ENCODE measurements at regions of chr12 and their contacts with region 1.

Region 1: GRCh38 chr12:7933255-7933729 is 2.7 kb downstream of the SLC2A3 start:
- DNase-seq: peak; percentile 48 to 95
- ATAC-seq: peak; percentile 71 to 92 (median 81)
- H3K4me3 ChIP-seq: peak overlapping the region; percentile 94
- H3K4me3 Mint-ChIP-seq: no peak overlapping the region
- H3K27ac ChIP-seq: peak overlapping the region; percentile 89
- H3K27ac Mint-ChIP-seq: no peak overlapping the region
- H3K4me1 ChIP-seq: peaks cover 54% of the 10 kb centered on the region
- H3K4me1 Mint-ChIP-seq: peaks cover 30 to 36% of the 10 kb centered on the region in 2 donors
- H3K27me3 ChIP-seq: no peaks in the 10 kb centered on the region
- H3K27me3 Mint-ChIP-seq: no peaks in the 10 kb centered on the region
- CTCF ChIP-seq: peak; percentile 69

Region 2: GRCh38 chr12:7859552-7859951 is 73.7 kb before region 1 on chr12:
- intact Hi-C with region 1: loop called (anchors 1 kb)
- DNase-seq: no peak
- ATAC-seq: no peak
- H3K4me3 ChIP-seq: no peak overlapping the region
- H3K4me3 Mint-ChIP-seq: no peak overlapping the region
- H3K27ac ChIP-seq: no peak overlapping the region
- H3K27ac Mint-ChIP-seq: peak overlapping the region in 1 of 2 donors; percentile 69
- H3K4me1 ChIP-seq: peaks cover 13% of the 10 kb centered on the region
- H3K4me1 Mint-ChIP-seq: peaks cover 15 to 21% of the 10 kb centered on the region in 2 donors
- H3K27me3 ChIP-seq: peaks cover 2% of the 10 kb centered on the region
- H3K27me3 Mint-ChIP-seq: peaks cover 9 to 10% of the 10 kb centered on the region in 2 donors
- CTCF ChIP-seq: no peak

Region 3: GRCh38 chr12:7899755-7900154 is 33.5 kb before region 1 on chr12:
- intact Hi-C with region 1: no loop called
- DNase-seq: no peak
- ATAC-seq: no peak
- H3K4me3 ChIP-seq: no peak overlapping the region
- H3K4me3 Mint-ChIP-seq: no peak overlapping the region
- H3K27ac ChIP-seq: no peak overlapping the region
- H3K27ac Mint-ChIP-seq: no peak overlapping the region
- H3K4me1 ChIP-seq: no peaks in the 10 kb centered on the region
- H3K4me1 Mint-ChIP-seq: no peaks in the 10 kb centered on the region
- H3K27me3 ChIP-seq: no peaks in the 10 kb centered on the region
- H3K27me3 Mint-ChIP-seq: no peaks in the 10 kb centered on the region
- CTCF ChIP-seq: no peak

Region 4: GRCh38 chr12:7915559-7916403 is 17.5 kb before region 1 on chr12:
- intact Hi-C with region 1: no loop called
- DNase-seq: peak in 1 of 2 donors; percentile 50
- ATAC-seq: peak; percentile 59 to 83 (median 66)
- H3K4me3 ChIP-seq: no peak overlapping the region
- H3K4me3 Mint-ChIP-seq: peak overlapping the region; percentile 76
- H3K27ac ChIP-seq: peak overlapping the region; percentile 35
- H3K27ac Mint-ChIP-seq: peak overlapping the region; percentile 54 to 77
- H3K4me1 ChIP-seq: peaks cover 32% of the 10 kb centered on the region
- H3K4me1 Mint-ChIP-seq: peaks cover 32 to 50% of the 10 kb centered on the region in 2 donors
- H3K27me3 ChIP-seq: no peaks in the 10 kb centered on the region
- H3K27me3 Mint-ChIP-seq: no peaks in the 10 kb centered on the region
- CTCF ChIP-seq: no peak

Region 5: DNA sequence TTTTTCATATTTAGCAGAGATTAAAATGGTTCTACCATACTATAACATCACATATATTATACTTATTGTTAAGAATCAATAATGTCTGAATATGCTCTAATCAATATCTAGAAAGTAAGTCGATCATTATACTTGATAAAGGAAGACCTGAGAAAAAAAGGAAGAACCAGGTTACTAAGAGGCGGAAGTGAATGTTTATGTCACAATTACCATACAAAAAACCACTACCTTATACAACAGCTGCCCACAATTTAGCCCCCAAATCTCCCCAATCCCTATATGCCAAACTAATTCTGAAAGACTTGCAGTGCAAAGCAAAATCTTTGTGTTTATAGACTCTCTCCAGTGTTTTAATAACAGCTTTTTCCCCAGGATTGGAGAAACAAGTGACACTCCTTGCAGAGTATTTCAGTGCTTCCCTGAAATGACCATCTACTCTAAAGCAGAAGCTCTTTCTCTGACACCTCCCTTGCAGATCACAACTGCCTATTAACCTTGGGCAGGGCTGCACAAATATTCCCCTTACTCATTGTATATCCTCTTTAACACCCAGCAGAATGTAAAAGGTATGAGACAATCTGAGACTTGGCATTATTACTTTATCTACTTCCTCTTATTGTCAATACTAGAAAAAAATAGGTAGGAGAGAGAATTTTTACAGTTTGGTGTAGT is 15.4 kb after region 1 on chr12:
- intact Hi-C with region 1: no loop called
- DNase-seq: no peak
- ATAC-seq: peak in 2 of 3 donors; percentile 57 to 60
- H3K4me3 ChIP-seq: no peak overlapping the region
- H3K4me3 Mint-ChIP-seq: no peak overlapping the region
- H3K27ac ChIP-seq: no peak overlapping the region
- H3K27ac Mint-ChIP-seq: peak overlapping the region in 1 of 2 donors; percentile 56
- H3K4me1 ChIP-seq: peaks cover 18% of the 10 kb centered on the region
- H3K4me1 Mint-ChIP-seq: peaks cover 0 to 9% of the 10 kb centered on the region in 2 donors
- H3K27me3 ChIP-seq: no peaks in the 10 kb centered on the region
- H3K27me3 Mint-ChIP-seq: no peaks in the 10 kb centered on the region
- CTCF ChIP-seq: no peak

Region 6: DNA sequence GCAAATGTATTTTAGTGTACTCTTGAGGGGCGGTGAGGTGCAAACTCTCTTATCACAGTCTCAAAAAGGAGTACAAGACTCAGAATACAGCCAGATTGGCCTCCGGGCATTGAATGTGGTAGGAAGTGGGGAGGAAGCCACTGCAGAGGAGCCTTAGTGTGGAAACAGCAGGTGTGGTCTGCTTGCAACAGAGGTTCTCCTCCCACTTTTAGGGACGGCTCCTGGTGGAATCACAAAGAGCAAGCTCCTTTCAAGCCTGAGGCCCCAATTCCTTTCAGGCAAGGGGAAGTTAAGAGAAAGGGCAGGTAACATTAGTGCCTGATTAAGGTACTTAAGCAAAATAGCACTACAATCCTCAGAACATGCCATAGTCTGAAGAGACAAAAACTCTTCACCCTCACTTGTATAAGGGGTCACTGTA is 26.4 kb after region 1 on chr12:
- intact Hi-C with region 1: loop called (anchors 1 kb)
- DNase-seq: peak; percentile 42 to 77
- ATAC-seq: peak; percentile 33 to 63 (median 45)
- H3K4me3 ChIP-seq: peak overlapping the region; percentile 46
- H3K4me3 Mint-ChIP-seq: peak overlapping the region; percentile 85
- H3K27ac ChIP-seq: peak overlapping the region; percentile 83
- H3K27ac Mint-ChIP-seq: peak overlapping the region; percentile 88 to 96
- H3K4me1 ChIP-seq: peaks cover 27% of the 10 kb centered on the region
- H3K4me1 Mint-ChIP-seq: peaks cover 32 to 38% of the 10 kb centered on the region in 2 donors
- H3K27me3 ChIP-seq: no peaks in the 10 kb centered on the region
- H3K27me3 Mint-ChIP-seq: no peaks in the 10 kb centered on the region
- CTCF ChIP-seq: no peak

Region 7: DNA sequence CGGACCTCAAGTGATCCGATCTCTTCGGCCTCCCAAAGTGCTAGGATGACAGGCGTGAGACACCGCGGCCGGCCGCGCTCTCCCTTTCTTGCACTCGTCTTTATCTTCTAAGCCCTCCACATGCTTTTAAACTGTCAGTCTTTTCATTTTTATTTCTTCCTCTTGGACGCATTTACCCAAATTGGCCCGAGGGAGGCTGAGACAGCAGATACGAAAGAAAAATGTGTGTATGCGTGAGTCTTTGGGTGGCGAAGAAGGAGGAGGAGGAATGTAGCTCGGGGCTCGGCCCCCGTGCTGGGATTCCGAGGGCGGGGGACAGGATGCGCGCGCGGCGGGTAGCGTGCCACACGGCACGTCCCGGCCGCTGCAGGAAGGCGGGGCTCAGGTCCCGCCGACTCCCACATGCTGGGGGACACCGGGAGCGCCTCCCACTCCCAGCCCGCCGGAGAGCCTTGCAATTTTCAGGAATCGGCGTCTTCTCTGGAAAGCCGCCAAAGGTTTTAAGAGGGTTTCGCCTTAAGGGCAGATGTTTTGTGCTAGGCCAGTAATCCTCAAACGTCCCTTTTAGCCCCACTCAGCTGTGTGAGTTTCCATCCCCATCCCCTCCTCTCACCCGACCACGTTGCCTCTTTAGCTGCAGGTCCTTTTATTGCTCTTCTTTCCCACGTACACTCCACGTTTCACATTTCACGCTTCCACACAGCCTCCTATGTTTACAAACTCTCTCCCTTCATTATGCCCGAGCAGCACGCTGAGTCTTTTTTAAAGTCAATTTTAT is 37.4 kb after region 1 on chr12:
- intact Hi-C with region 1: loop called (anchors 5 kb)
- DNase-seq: peak; percentile 69 to 95
- ATAC-seq: peak; percentile 91 to 96 (median 92)
- H3K4me3 ChIP-seq: peak overlapping the region; percentile 79
- H3K4me3 Mint-ChIP-seq: peak overlapping the region; percentile 82
- H3K27ac ChIP-seq: peak overlapping the region; percentile 98
- H3K27ac Mint-ChIP-seq: peak overlapping the region; percentile 86 to 90
- H3K4me1 ChIP-seq: peaks cover 24% of the 10 kb centered on the region
- H3K4me1 Mint-ChIP-seq: peaks cover 14 to 17% of the 10 kb centered on the region in 2 donors
- H3K27me3 ChIP-seq: no peaks in the 10 kb centered on the region
- H3K27me3 Mint-ChIP-seq: no peaks in the 10 kb centered on the region
- CTCF ChIP-seq: no peak

Region 8: DNA sequence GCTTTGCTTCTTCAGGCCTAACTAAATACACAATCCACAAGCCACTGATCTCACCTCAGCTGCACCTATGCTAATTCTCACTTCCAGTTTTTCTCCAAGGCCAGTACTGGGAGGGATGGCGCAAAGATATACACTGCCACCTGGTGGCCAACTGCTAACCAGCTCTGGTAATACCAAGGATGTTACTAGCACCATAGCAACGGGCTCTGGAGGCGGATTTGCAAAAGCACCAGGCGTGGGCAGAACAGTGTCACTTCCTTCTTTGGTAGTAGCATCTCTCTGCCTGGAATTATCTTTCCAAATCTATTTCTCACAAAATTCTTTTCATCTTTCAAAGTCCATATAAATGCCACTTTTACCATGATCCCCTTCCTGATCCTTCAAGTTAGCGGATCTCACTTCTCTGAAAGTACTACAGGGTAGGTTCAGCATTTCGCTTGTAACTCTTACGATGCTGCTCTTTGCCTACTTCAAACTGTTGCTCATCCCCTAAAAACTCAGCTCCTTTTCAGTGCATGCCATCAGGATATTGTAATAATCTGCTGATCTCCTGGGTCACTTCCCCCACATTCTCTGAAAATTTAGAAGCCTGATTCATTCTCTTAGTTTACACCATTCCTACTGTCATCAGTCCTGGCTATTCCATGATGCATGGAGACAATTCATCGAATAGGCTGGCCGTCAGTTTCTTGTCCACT is 62.1 kb after region 1 on chr12:
- intact Hi-C with region 1: loop called (anchors 1 kb)
- DNase-seq: peak; percentile 62 to 90
- ATAC-seq: peak; percentile 98 to 100 (median 99)
- H3K4me3 ChIP-seq: no peak overlapping the region
- H3K4me3 Mint-ChIP-seq: no peak overlapping the region
- H3K27ac ChIP-seq: peak overlapping the region; percentile 22
- H3K27ac Mint-ChIP-seq: no peak overlapping the region
- H3K4me1 ChIP-seq: peaks cover 7% of the 10 kb centered on the region
- H3K4me1 Mint-ChIP-seq: peaks cover 11 to 12% of the 10 kb centered on the region in 2 donors
- H3K27me3 ChIP-seq: no peaks in the 10 kb centered on the region
- H3K27me3 Mint-ChIP-seq: no peaks in the 10 kb centered on the region
- CTCF ChIP-seq: peak; percentile 78

Region 9: GRCh38 chr12:8026291-8026900 is 93.1 kb after region 1 on chr12:
- intact Hi-C with region 1: loop called (anchors 1 kb)
- DNase-seq: peak; percentile 94 to 98
- ATAC-seq: peak; percentile 93 to 99 (median 93)
- H3K4me3 ChIP-seq: peak overlapping the region; percentile 88
- H3K4me3 Mint-ChIP-seq: peak overlapping the region; percentile 99
- H3K27ac ChIP-seq: peak overlapping the region; percentile 99
- H3K27ac Mint-ChIP-seq: peak overlapping the region; percentile 100
- H3K4me1 ChIP-seq: peaks cover 13% of the 10 kb centered on the region
- H3K4me1 Mint-ChIP-seq: peaks cover 17 to 18% of the 10 kb centered on the region in 2 donors
- H3K27me3 ChIP-seq: no peaks in the 10 kb centered on the region
- H3K27me3 Mint-ChIP-seq: no peaks in the 10 kb centered on the region
- CTCF ChIP-seq: no peak

Region 10: DNA sequence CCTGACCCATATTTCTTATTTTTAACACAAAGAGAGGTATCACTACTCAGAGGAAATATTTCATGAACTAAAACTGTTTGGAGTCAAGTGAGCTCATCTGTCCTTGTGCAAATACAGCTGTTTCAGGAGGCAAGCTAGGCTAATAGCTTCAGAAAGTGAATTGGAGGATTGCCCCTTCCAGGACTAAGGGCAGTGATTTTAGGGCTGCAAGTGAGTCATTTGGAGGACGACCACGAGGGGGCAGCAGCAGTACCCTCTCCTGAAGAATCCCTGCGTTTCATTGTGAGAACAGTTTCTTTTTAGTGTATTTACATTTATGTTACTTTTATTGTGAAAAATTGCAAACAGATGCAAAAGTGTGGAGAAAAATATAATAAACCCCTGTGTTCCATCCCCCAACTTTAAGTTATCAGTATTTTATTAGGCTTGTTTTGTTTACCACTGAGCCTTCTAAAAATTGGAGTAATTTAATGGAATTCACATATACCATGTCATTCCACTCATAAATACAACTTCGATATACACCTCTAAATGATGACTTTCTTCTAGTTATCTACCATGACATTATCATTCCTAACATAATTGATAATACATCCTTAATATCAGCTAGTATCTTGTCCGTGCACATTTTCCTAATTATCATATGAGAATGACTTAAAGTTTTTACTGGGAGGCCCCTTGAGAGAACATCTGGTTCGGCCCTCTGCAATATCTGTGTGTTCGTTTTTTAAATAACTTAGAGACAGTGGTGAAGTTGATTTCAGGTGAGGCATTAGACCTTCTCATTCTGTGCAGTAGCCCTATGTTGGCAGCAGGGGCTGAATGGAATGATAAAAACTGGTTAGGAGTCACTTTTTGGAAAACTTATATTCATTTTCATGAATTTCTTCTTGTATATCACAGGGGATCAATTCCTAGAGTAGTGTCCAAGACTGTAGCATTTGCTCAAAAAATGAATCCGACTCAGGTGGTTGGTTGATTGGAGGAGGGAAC is 113.0 kb after region 1 on chr12:
- intact Hi-C with region 1: no loop called
- DNase-seq: peak; percentile 73 to 90
- ATAC-seq: peak; percentile 87 to 94 (median 90)
- H3K4me3 ChIP-seq: no peak overlapping the region
- H3K4me3 Mint-ChIP-seq: no peak overlapping the region
- H3K27ac ChIP-seq: no peak overlapping the region
- H3K27ac Mint-ChIP-seq: no peak overlapping the region
- H3K4me1 ChIP-seq: no peaks in the 10 kb centered on the region
- H3K4me1 Mint-ChIP-seq: peaks cover 0 to 5% of the 10 kb centered on the region in 2 donors
- H3K27me3 ChIP-seq: no peaks in the 10 kb centered on the region
- H3K27me3 Mint-ChIP-seq: no peaks in the 10 kb centered on the region
- CTCF ChIP-seq: peak; percentile 87

Region 11: GRCh38 chr12:8088574-8088973 is 155.3 kb after region 1 on chr12:
- intact Hi-C with region 1: loop called (anchors 5 kb)
- DNase-seq: peak in 1 of 2 donors; percentile 77
- ATAC-seq: peak; percentile 83 to 95 (median 89)
- H3K4me3 ChIP-seq: no peak overlapping the region
- H3K4me3 Mint-ChIP-seq: peak overlapping the region; percentile 70
- H3K27ac ChIP-seq: peak overlapping the region; percentile 80
- H3K27ac Mint-ChIP-seq: peak overlapping the region; percentile 86 to 90
- H3K4me1 ChIP-seq: peaks cover 27% of the 10 kb centered on the region
- H3K4me1 Mint-ChIP-seq: peaks cover 34 to 36% of the 10 kb centered on the region in 2 donors
- H3K27me3 ChIP-seq: no peaks in the 10 kb centered on the region
- H3K27me3 Mint-ChIP-seq: no peaks in the 10 kb centered on the region
- CTCF ChIP-seq: no peak

Measured in natural killer cell (primary cell).